Mammary epithelial cell (primary cell): ENCODE measurements at regions of chr12 and their contacts with region 1.

Region 1: GRCh38 chr12:76020731-76021672 is 10.6 kb downstream of the PHLDA1 start:
- DNase-seq: peak; percentile 97
- H3K4me3 ChIP-seq: no peak overlapping the region
- H3K27ac ChIP-seq: peak overlapping the region; percentile 99
- H3K4me1 ChIP-seq: peaks cover 64% of the 10 kb centered on the region
- H3K27me3 ChIP-seq: no peaks in the 10 kb centered on the region
- CTCF ChIP-seq: no peak

Region 2: GRCh38 chr12:75568393-75568792 is 452.6 kb before region 1 on chr12:
- CTCF ChIA-PET with region 1: no interaction called
- dilution Hi-C with region 1: no loop called
- in situ Hi-C with region 1: no loop called
- intact Hi-C with region 1: no loop called
- DNase-seq: peak; percentile 57
- H3K4me3 ChIP-seq: no peak overlapping the region
- H3K27ac ChIP-seq: no peak overlapping the region
- H3K4me1 ChIP-seq: peaks cover 21% of the 10 kb centered on the region
- H3K27me3 ChIP-seq: no peaks in the 10 kb centered on the region
- CTCF ChIP-seq: no peak

Region 3: GRCh38 chr12:75722714-75723200 is 298.2 kb before region 1 on chr12:
- CTCF ChIA-PET with region 1: no interaction called
- dilution Hi-C with region 1: no loop called
- in situ Hi-C with region 1: no loop called
- intact Hi-C with region 1: loop called (anchors 2 kb)
- DNase-seq: peak; percentile 85
- H3K4me3 ChIP-seq: no peak overlapping the region
- H3K27ac ChIP-seq: peak overlapping the region; percentile 88
- H3K4me1 ChIP-seq: peaks cover 59% of the 10 kb centered on the region
- H3K27me3 ChIP-seq: no peaks in the 10 kb centered on the region
- CTCF ChIP-seq: no peak

Region 4: DNA sequence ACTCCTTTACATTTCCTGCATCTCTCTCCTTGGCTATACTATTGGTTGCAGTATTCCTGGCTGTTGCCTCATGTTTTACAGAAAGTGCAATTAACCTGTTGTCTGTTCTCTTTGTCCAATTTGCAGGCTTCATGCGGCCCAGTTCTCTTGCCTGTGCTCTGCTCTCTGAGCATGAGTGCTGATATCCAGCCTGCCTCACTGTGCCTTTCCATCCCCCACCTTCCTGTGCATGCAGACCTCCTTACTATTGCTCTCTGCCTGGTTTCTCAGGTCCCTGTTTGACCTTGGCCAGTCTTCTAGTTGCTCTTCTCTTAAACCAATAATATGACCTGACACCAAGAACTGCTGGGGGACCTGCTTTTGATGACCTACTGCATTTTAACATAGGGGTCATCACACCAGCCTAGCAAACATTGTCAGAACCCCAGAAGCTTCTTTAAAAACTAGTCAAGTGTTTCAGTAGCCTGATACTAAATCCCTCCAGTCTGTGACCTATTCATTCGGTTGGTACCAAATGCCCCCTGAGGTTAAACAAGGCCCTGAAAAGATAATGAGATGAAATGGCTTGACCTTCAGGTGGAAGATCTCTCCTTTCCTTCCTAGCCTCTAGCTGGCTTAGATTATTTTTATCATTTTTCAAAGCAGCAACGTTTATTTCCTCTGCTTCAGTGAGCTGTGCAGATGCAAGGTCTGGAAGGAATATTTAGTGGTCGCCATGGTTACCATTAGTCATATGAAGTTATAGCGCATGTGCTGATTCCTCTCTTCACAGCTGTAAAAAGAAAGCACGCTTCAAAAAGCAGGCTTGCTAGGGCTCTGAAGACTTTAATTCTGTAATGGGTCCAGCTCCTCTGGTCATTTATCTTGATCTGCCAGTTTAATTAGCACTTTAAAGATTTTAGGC is 205.9 kb before region 1 on chr12:
- CTCF ChIA-PET with region 1: no interaction called
- dilution Hi-C with region 1: no loop called
- in situ Hi-C with region 1: loop called in 1 of 2 experiments (anchors 5 kb)
- intact Hi-C with region 1: loop called (anchors 1 kb)
- DNase-seq: peak; percentile 66
- H3K4me3 ChIP-seq: no peak overlapping the region
- H3K27ac ChIP-seq: peak overlapping the region; percentile 60
- H3K4me1 ChIP-seq: peaks cover 23% of the 10 kb centered on the region
- H3K27me3 ChIP-seq: no peaks in the 10 kb centered on the region
- CTCF ChIP-seq: no peak

Region 5: GRCh38 chr12:75862692-75863471 is 158.1 kb before region 1 on chr12:
- CTCF ChIA-PET with region 1: interaction called, 7 read pairs
- dilution Hi-C with region 1: no loop called
- in situ Hi-C with region 1: loop called in 1 of 2 experiments (anchors 10 kb)
- intact Hi-C with region 1: loop called (anchors 1 kb)
- DNase-seq: peak; percentile 94
- H3K4me3 ChIP-seq: no peak overlapping the region
- H3K27ac ChIP-seq: peak overlapping the region; percentile 99
- H3K4me1 ChIP-seq: peaks cover 46% of the 10 kb centered on the region
- H3K27me3 ChIP-seq: no peaks in the 10 kb centered on the region
- CTCF ChIP-seq: no peak

Region 6: DNA sequence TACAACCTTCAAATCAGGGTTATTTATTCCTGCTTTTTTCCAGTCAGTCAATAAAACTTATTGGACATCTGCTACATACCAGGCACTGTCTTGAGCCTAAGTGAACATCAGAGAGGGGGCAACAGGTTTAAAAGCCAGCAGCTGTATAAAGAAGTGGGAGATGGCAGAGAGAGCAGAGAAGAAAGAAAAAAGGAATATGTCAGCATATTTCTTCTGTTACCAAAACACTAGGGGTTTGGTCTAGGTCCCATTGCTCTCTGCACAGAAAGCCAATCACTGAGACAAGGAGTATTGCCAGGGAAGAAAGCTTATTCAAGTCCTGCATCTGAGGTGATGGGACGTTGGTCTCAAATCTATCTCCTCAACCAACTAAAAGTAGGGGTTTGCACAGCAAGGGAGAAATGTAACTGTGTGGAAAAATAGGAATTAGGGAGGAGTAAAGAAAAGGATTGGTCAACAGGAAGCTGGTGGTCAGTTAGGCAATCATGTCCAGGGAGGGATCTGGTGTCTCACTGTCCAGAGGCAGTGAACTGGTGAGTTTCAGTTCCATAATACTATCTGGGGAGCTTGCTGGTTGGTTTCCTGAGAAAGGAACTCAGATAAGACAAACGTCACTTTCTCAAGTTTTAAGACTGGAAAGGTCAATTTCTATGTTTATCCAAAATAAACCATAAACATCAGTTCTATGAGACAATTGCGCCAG is 96.9 kb before region 1 on chr12:
- CTCF ChIA-PET with region 1: no interaction called
- dilution Hi-C with region 1: no loop called
- in situ Hi-C with region 1: no loop called
- intact Hi-C with region 1: no loop called
- DNase-seq: no peak
- H3K4me3 ChIP-seq: no peak overlapping the region
- H3K27ac ChIP-seq: no peak overlapping the region
- H3K4me1 ChIP-seq: no peaks in the 10 kb centered on the region
- H3K27me3 ChIP-seq: no peaks in the 10 kb centered on the region
- CTCF ChIP-seq: no peak

Region 7: GRCh38 chr12:75944097-75944904 is 76.7 kb before region 1 on chr12:
- CTCF ChIA-PET with region 1: no interaction called
- dilution Hi-C with region 1: no loop called
- in situ Hi-C with region 1: no loop called
- intact Hi-C with region 1: loop called (anchors 1 kb)
- DNase-seq: peak; percentile 93
- H3K4me3 ChIP-seq: peak overlapping the region in 2 of 3 experiments; percentile 1 to 2
- H3K27ac ChIP-seq: peak overlapping the region; percentile 87
- H3K4me1 ChIP-seq: peaks cover 34% of the 10 kb centered on the region
- H3K27me3 ChIP-seq: no peaks in the 10 kb centered on the region
- CTCF ChIP-seq: no peak

Region 8: DNA sequence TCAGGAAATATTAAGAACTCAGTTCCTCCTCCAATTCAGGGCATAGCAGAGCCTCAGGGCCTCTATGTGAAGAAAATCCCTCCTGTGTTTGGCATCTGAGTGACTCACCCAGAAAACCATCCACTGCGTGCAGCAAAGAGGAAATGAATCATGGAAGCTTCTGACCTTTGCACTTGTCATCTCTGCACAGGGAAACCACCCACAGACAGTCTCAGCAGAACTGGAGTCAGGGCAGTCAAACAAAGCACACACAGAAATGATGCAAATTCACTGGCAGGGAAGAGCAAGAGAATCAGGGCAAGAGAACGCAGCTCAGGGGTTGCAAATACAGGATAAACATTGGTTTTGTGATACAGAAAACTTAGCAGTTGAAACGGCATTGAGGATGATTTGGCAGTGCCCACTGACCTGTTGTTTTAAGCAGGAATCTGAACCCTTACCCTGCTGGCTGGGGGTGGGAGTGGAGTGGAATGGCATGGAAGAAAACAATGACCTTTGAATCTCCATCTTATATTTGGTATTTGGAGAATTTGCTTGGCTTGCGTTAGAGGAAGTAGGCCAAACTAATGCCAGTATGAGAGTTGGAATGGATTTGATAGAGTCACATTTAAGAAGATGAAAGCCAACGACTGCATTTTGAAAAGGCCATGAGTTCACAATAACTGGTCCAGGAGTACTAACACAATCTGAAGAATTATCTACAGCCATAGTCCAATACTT is 42.9 kb before region 1 on chr12:
- CTCF ChIA-PET with region 1: no interaction called
- dilution Hi-C with region 1: no loop called
- in situ Hi-C with region 1: no loop called
- intact Hi-C with region 1: loop called (anchors 1 kb)
- DNase-seq: peak; percentile 99
- H3K4me3 ChIP-seq: no peak overlapping the region
- H3K27ac ChIP-seq: peak overlapping the region; percentile 96
- H3K4me1 ChIP-seq: peaks cover 37% of the 10 kb centered on the region
- H3K27me3 ChIP-seq: no peaks in the 10 kb centered on the region
- CTCF ChIP-seq: no peak

Region 9: GRCh38 chr12:76455582-76456345 is 434.8 kb after region 1 on chr12:
- CTCF ChIA-PET with region 1: no interaction called
- dilution Hi-C with region 1: no loop called
- in situ Hi-C with region 1: no loop called
- intact Hi-C with region 1: loop called (anchors 2 kb)
- DNase-seq: peak; percentile 89
- H3K4me3 ChIP-seq: no peak overlapping the region
- H3K27ac ChIP-seq: peak overlapping the region; percentile 97
- H3K4me1 ChIP-seq: peaks cover 27% of the 10 kb centered on the region
- H3K27me3 ChIP-seq: no peaks in the 10 kb centered on the region
- CTCF ChIP-seq: peak; percentile 70 to 73